HEK293 (cell line): ENCODE measurements at regions of chr1 and their contacts with region 1.

Region 1: GRCh38 chr1:164625001-164625617 is 66.1 kb downstream of the PBX1 start:
- H3K4me3 ChIP-seq: no peak overlapping the region
- H3K27ac ChIP-seq: no peak overlapping the region
- H3K4me1 ChIP-seq: peaks cover 3% of the 10 kb centered on the region; the same call in 1 of the 2 replicates
- CTCF ChIP-seq: no peak

Region 2: GRCh38 chr1:164611754-164612642 is 13.1 kb before region 1 on chr1:
- CTCF ChIA-PET with region 1: interaction called, 10 read pairs
- POLR2A ChIA-PET with region 1: no interaction called
- H3K4me3 ChIP-seq: peak overlapping the region; percentile 7
- H3K27ac ChIP-seq: peak overlapping the region; percentile 95
- H3K4me1 ChIP-seq: peaks cover 24% of the 10 kb centered on the region
- CTCF ChIP-seq: no peak